HEK293 (cell line): ENCODE measurements at regions of chr11 and their contacts with region 1.

Region 1: DNA sequence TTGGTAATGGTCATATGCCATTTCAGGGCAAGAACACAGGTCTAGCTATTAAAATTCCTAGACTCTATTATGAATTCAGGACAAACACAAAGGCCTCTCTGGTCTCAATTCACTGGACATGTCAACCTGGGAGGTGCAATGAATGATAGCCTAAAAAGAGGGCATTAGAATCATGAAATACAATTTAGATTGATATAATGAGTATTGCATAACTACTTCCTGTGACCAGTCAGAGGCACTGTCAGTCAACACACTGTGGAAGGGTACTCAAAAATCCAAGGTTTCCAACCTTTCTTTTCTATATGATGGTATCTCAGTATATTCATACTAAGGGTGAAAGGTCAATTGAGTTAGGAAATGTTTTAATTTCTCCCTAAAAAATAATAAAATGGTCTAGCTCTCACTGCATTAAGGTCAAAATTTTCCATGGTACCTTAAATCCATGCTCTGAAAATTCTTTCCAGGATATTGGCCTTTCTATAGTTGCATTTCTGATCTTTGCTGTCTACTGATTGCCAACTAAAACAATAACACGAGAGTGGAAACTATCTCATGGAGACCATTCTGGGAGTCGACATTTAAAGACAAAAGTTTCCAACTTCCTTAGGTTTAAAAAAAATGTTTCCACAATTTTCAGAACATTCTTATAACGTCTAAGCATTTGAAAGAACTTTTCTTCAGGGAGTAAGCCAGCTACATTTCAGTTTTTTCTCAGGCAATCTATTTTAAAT is 81.7 kb upstream of the APOA1 start:
- H3K4me3 ChIP-seq: no peak overlapping the region
- H3K27ac ChIP-seq: no peak overlapping the region
- H3K4me1 ChIP-seq: no peaks in the 10 kb centered on the region
- CTCF ChIP-seq: no peak

Region 2: GRCh38 chr11:116890193-116890592 is 28.9 kb before region 1 on chr11:
- CTCF ChIA-PET with region 1: no interaction called
- POLR2A ChIA-PET with region 1: no interaction called
- H3K4me3 ChIP-seq: no peak overlapping the region
- H3K27ac ChIP-seq: no peak overlapping the region
- H3K4me1 ChIP-seq: no peaks in the 10 kb centered on the region
- CTCF ChIP-seq: no peak

Region 3: GRCh38 chr11:116946410-116946809 is 27.3 kb after region 1 on chr11:
- CTCF ChIA-PET with region 1: no interaction called
- POLR2A ChIA-PET with region 1: no interaction called
- H3K4me3 ChIP-seq: no peak overlapping the region
- H3K27ac ChIP-seq: no peak overlapping the region
- H3K4me1 ChIP-seq: no peaks in the 10 kb centered on the region
- CTCF ChIP-seq: no peak

Region 4: DNA sequence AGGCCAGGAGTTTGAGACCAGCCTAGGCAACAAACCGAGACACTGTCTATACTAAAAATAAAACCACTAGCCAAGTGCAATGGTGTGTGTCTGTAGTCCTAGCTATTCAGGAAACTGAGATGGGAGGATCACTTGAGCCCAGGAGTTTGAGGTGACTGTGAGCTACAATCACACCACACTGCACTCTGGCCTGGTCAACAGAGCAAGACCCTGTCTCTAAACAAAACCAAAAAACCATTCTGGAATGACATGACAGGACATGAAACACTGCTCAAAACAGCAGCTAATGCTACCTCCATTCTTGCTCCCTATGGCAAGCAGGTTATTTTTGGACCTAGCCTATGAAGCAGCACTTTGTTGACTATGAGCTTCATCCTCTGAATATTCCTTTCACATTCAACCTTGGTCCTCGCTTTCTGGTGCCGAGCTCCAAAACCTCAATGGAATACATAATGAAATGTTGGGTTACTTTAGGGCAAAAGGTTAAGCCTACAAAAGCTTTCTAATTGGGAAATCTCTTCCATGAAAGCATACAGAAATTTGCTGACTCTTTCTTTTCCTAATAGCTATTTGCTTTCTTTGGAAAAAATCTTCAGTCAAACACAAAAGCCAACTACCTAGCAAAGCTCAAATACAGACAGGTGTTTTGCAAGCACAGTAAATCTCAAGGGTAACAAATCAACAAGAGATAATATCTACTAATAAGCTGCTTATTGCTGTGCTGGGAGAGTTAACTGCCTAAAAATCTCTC is 158.0 kb after region 1 on chr11:
- CTCF ChIA-PET with region 1: no interaction called
- POLR2A ChIA-PET with region 1: interaction called, 11 read pairs
- H3K4me3 ChIP-seq: no peak overlapping the region
- H3K27ac ChIP-seq: 0 out of 2 replicates have a peak overlapping the region, but pooled peaks have one; percentile 4
- H3K4me1 ChIP-seq: peaks cover 7% of the 10 kb centered on the region
- CTCF ChIP-seq: no peak